Dorsolateral prefrontal cortex (tissue), 120 donors: ENCODE measurements at regions of chr1 and their contacts with region 1.

Region 1: GRCh38 chr1:234499119-234499942 is 20.4 kb upstream of the TARBP1 start:
- DNase-seq: peak; percentile 86 to 96 (median 92)
- H3K4me3 ChIP-seq: peak overlapping the region in 56 of 59 donors; percentile 1 to 60 (median 36)
- H3K27ac ChIP-seq: peak overlapping the region; percentile 73 to 97 (median 90)
- H3K27me3 ChIP-seq: no peaks in the 10 kb centered on the region
- CTCF ChIP-seq: peak; percentile 88 to 99 (median 97)

Region 2: GRCh38 chr1:234533975-234534876 is 34.9 kb after region 1 on chr1:
- intact Hi-C with region 1: loop called in 1 of 2 experiments (anchors 1 kb)
- DNase-seq: peak; percentile 46 to 92 (median 82)
- H3K4me3 ChIP-seq: peak overlapping the region in 5 of 59 donors; percentile 3 to 18 (median 8)
- H3K27ac ChIP-seq: peak overlapping the region; percentile 81 to 99 (median 95)
- H3K27me3 ChIP-seq: no peaks in the 10 kb centered on the region
- CTCF ChIP-seq: peak in 4 of 56 donors; percentile 5 to 13 (median 8)

Region 3: DNA sequence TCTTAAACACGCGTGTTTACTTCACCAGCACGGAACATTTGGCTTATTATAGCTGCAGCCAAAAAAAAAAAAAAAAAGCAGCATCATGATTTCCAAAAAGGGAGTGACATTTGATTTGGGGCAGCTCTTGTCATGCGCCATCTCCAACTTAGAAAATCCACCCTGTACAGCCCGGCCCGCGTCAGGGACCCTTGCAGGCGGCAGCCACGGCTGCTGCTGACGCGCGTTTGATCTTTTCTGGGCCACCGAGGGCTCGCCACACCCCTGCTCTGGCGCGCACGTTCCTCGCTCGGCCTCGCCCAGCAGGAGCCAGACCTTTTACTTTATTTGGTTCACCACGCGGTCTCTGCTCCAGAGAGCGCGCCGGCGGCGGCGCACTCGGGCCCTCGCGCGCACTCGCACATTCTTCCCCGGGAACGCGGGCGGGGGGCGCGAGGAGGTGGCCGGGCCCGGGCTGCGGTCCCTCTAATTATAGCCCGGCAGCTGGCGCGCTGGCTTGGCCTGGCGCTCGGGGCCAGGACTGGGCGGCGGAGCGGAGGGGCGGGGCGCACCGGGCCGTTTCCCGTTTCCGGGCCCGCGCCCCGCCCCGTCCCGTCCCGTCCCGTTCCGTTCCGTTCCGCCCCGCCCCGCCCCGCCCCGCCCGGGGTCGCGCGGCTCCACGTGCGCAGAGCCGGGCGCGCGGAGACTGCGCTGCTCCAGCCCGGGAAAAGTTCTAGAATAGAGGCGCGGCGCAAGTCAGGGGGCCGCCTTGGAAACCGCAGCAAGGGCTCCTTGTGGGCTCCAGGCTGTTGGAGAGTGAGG is 100.5 kb after region 1 on chr1:
- intact Hi-C with region 1: loop called in 1 of 2 experiments (anchors 2 kb)
- DNase-seq: peak; percentile 67 to 86 (median 75)
- H3K4me3 ChIP-seq: peak overlapping the region; percentile 35 to 91 (median 67)
- H3K27ac ChIP-seq: peak overlapping the region; percentile 92 to 100 (median 99)
- H3K27me3 ChIP-seq: no peaks in the 10 kb centered on the region
- CTCF ChIP-seq: peak in 40 of 56 donors; percentile 10 to 59 (median 35)

Region 4: DNA sequence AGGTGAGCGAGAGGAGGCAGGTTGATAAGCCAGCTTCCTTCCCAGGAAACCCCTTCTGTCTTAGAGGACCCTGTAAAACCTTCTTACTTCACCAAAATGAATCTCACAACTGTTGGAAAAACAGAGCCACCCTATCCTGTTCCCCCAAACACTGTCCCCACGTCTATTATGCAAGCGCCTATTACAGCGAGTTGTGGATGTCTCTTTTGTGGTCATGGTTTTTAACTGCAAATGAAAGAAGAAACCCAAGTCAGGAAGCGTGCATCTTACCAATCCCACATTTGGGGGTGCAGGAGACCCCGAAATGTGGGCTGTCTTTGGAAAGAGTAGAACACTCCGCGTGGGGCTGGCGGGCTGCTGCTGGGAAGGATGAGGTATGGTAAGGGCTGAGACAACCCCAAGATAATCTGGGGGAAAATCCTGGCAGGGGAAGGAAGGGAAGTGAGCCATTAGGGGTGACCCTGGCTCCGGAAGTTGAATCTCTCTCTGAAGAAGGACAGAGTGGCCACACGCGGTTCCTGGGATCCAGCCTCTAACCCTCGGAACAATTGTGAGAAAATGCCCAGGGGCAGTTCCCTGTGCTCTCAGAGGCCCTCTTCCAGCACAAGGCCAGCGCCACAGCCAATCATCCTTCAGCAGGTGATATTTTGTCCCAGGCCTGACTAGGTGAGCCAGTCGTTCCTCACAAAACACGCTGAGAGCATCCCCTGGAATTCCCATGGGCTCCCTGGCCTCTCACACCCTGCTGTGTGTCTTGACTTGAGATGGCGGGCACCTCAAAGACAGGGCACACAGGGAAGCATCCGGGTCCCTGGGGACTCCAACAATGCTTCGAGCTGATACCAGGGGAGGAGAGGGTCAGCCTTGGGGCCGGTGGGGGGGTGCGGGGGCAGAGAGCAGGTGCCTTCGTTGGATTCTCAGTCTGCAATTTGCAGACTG is 279.2 kb after region 1 on chr1:
- intact Hi-C with region 1: no loop called
- DNase-seq: peak in 2 of 10 donors; percentile 27 to 49
- H3K4me3 ChIP-seq: no peak overlapping the region
- H3K27ac ChIP-seq: no peak overlapping the region
- H3K27me3 ChIP-seq: peaks cover 0 to 37% (median 0%) of the 10 kb centered on the region in 45 donors
- CTCF ChIP-seq: no peak

Region 5: GRCh38 chr1:234997201-234997895 is 498.0 kb after region 1 on chr1:
- intact Hi-C with region 1: loop called in 1 of 2 experiments (anchors 10 kb)
- DNase-seq: peak; percentile 90 to 98 (median 96)
- H3K4me3 ChIP-seq: peak overlapping the region in 43 of 59 donors; percentile 0 to 48 (median 24)
- H3K27ac ChIP-seq: peak overlapping the region; percentile 74 to 97 (median 90)
- H3K27me3 ChIP-seq: no peaks in the 10 kb centered on the region
- CTCF ChIP-seq: peak in 10 of 56 donors; percentile 5 to 39 (median 22)